ENCODE measurements at regions of chr6 and their contacts with region 1.

Region 1: GRCh38 chr6:32796848-32797776 is 19.7 kb downstream of the HLA-DOB start:
- DNase-seq: peak; percentile 42 to 95 (median 76)
- ATAC-seq: peak; percentile 68 to 90 (median 88)
- H3K4me3 ChIP-seq: no peak overlapping the region
- H3K27ac ChIP-seq: no peak overlapping the region
- H3K4me1 ChIP-seq: no peaks in the 10 kb centered on the region
- H3K27me3 ChIP-seq: peaks cover 0 to 14% (median 2%) of the 10 kb centered on the region in 4 donors
- CTCF ChIP-seq: peak; percentile 82 to 91 (median 88)

Region 2: DNA sequence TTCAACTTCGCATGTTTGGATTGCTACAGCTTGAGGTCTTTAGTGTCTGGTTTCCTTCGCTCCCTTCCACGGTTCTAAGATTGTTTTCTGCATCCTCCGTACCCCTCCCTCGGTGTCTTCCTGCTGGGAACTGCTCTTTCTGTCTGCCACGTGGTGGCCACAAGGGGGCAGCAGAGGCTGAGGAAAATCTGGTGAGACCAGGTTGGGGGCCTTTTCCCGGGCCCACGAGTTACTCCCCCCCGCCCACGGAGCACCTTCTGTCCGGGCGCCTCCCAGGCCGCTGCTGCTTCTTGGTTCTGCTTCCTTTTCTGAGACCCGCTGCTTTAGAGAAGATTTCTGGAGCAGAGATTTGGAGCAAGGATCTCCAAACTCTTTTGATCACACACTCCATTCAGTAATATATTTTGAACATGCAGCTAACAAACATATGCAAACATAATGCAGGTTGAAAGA is 552.1 kb before region 1 on chr6:
- intact Hi-C with region 1: loop called in 1 of 3 experiments (anchors 10 kb)
- DNase-seq: peak; percentile 50 to 87 (median 70)
- ATAC-seq: peak; percentile 72 to 97 (median 90)
- H3K4me3 ChIP-seq: no peak overlapping the region
- H3K27ac ChIP-seq: no peak overlapping the region
- H3K4me1 ChIP-seq: no peaks in the 10 kb centered on the region
- H3K27me3 ChIP-seq: no peaks in the 10 kb centered on the region
- CTCF ChIP-seq: peak; percentile 79 to 91 (median 88)

Region 3: GRCh38 chr6:32413427-32414047 is 383.6 kb before region 1 on chr6:
- intact Hi-C with region 1: loop called in 1 of 3 experiments (anchors 5 kb)
- DNase-seq: peak; percentile 47 to 92 (median 78)
- ATAC-seq: peak; percentile 85 to 95 (median 92)
- H3K4me3 ChIP-seq: no peak overlapping the region
- H3K27ac ChIP-seq: no peak overlapping the region
- H3K4me1 ChIP-seq: no peaks in the 10 kb centered on the region
- H3K27me3 ChIP-seq: peaks cover 0 to 28% (median 4%) of the 10 kb centered on the region in 4 donors
- CTCF ChIP-seq: peak; percentile 87 to 95 (median 92)

Region 4: DNA sequence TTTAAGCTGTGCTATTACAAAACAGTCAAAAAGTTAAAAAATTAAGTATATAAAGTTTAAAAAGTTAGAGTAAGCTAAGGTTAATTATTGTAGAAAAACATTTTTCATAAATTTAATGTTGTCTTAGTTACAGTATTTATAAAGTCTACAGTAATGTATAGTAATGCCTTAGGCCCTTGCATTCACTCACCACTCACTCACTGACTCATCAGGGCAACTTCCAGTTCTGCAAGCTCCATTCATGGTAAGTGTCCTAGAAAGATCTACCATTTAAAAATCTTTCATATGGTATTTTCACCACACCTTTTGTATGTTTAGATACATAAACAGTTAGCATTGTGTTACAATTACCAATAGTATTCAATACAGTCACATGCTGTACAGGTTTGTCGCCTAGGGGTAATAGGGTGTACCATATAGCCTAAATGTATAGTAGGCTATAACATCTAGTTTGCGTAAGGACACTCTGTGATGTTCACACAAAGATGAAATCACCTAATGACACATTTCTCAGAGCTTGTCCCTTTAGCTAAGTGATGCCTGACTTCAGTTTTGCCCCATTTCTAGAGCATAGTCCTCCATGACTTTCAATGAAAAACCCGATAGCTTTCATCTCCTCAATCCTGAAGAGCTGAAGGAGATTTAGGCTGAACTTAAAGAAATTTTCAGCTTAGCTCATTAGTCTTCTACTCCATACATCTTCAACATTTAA is 372.4 kb before region 1 on chr6:
- intact Hi-C with region 1: loop called in 1 of 3 experiments (anchors 10 kb)
- DNase-seq: no peak
- ATAC-seq: no peak
- H3K4me3 ChIP-seq: no peak overlapping the region
- H3K27ac ChIP-seq: no peak overlapping the region
- H3K4me1 ChIP-seq: no peaks in the 10 kb centered on the region
- H3K27me3 ChIP-seq: no peaks in the 10 kb centered on the region
- CTCF ChIP-seq: no peak

Region 5: DNA sequence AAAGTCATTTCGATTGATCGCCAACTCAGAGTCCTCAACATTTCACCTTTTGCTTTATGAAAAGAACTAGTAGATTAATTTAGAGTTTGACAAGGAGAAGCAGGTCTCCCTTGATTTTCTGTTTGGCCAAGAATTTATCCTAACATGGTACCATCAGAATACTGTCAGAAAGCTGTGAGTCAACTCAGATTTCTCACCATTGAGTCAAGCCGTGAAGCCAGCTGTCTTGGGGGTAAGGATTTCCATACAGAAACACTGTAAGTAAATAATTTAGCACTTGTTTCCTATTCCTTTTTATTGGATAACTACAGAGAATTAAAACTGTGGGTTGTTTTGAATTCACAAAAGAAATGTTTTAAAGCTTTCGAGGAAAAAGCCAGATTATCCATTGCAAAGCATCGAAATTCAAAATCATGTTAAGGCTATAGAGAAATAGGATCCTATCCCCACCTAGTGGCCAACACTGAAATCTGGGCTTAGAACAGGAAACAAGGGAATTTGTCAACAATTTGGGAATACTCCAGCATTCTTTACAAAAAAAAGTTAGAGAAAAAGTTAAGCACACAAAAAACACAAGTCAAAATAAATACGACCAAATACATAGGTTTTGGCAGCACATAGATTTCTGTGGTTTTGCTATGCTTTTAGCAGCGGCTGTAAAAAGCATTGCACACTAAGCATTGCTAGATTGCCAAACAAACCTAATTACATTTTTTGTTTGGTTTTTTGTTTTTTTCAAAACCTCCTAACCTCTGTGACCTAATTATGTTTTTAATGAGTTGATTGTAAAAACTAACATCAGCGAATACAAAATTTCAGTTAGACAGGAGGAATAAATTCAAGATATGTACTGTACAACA is 350.9 kb after region 1 on chr6:
- intact Hi-C with region 1: no loop called
- DNase-seq: no peak
- ATAC-seq: peak; percentile 46 to 85 (median 74)
- H3K4me3 ChIP-seq: no peak overlapping the region
- H3K27ac ChIP-seq: no peak overlapping the region
- H3K4me1 ChIP-seq: no peaks in the 10 kb centered on the region
- H3K27me3 ChIP-seq: no peaks in the 10 kb centered on the region
- CTCF ChIP-seq: peak; percentile 35 to 74 (median 59)

Measured in pancreas (tissue), 10 donors.